Right cardiac atrium (tissue), 5 donors: ENCODE measurements at regions of chr16 and their contacts with region 1.

Region 1: GRCh38 chr16:68040507-68041288 is 17.6 kb downstream of the DUS2 start:
- DNase-seq: peak; percentile 81 to 92 (median 91)
- ATAC-seq: peak; percentile 93 to 94
- H3K4me3 ChIP-seq: no peak overlapping the region
- H3K27ac ChIP-seq: no peak overlapping the region
- H3K4me1 ChIP-seq: no peaks in the 10 kb centered on the region
- H3K27me3 ChIP-seq: no peaks in the 10 kb centered on the region

Region 2: GRCh38 chr16:67967958-67968399 is 72.7 kb before region 1 on chr16:
- intact Hi-C with region 1: no loop called
- DNase-seq: peak; percentile 72 to 88 (median 87)
- ATAC-seq: peak; percentile 39 to 41
- H3K4me3 ChIP-seq: peak overlapping the region; percentile 73
- H3K27ac ChIP-seq: peak overlapping the region; percentile 83
- H3K4me1 ChIP-seq: peaks cover 32% of the 10 kb centered on the region
- H3K27me3 ChIP-seq: no peaks in the 10 kb centered on the region

Region 3: GRCh38 chr16:67979955-67980678 is 60.6 kb before region 1 on chr16 and contains the start of gene DPEP3:
- intact Hi-C with region 1: loop called in 1 of 4 experiments (anchors 10 kb)
- DNase-seq: peak in 1 of 3 donors; percentile 39
- ATAC-seq: no peak
- H3K4me3 ChIP-seq: no peak within 1 kb of the TSS
- H3K27ac ChIP-seq: no peak within 1 kb of the TSS
- H3K4me1 ChIP-seq: peaks cover 3% of the 10 kb centered on the region
- H3K27me3 ChIP-seq: no peaks in the 10 kb centered on the region
- total RNA-seq, gene DPEP3: not detected